Right ventricle myocardium inferior (tissue), 1 donor: ENCODE measurements at regions of chr17 and their contacts with region 1.

Region 1: GRCh38 chr17:45277216-45277849 is 15.4 kb upstream of the SPATA32 start:
- DNase-seq: peak; percentile 98
- ATAC-seq: peak; percentile 71

Region 2: DNA sequence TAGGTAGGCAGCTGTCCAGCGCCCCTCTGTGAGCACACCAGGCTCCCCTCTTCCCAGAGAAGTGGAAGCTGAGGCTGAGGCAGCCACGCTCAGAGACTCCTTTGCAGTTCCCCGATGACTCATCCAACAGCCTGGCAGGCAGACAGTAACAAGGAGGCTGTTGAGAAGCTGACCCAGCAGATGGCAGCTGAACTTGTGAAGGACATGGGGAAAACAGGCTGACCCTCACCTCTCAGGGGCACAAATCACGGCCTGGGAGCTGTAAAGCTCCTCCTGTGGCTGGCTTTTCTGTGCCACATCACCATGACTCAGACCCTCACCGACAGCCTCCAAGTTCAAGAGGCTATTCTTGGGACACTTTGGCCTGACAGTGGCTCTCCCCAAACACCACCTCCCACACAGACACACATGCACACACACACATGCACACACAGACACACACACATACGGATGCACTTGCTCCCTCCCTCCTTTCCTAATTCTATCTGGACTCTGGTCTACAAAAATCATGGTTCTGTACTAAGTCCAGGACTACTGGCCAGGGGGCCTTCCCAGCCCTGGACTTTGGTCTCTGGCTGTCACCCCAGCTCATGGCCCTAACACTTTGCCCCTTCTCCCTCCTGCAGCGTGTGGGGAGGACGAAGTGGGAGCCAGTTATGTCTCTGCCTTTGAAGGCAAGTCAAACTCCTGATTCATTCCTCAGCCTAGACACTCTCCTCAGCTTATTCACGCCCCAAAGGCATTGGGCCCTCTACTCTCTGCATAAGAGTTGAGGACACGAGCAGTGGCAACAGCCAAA is 16.3 kb after region 1 on chr17:
- intact Hi-C with region 1: no loop called
- DNase-seq: no peak
- ATAC-seq: peak; percentile 80

Region 3: GRCh38 chr17:45385331-45385997 is 108.1 kb after region 1 on chr17:
- intact Hi-C with region 1: loop called (anchors 1 kb)
- DNase-seq: peak; percentile 95
- ATAC-seq: peak; percentile 93